Colonic mucosa (tissue), 4 donors: ENCODE measurements at regions of chr10 and their contacts with region 1.

Region 1: DNA sequence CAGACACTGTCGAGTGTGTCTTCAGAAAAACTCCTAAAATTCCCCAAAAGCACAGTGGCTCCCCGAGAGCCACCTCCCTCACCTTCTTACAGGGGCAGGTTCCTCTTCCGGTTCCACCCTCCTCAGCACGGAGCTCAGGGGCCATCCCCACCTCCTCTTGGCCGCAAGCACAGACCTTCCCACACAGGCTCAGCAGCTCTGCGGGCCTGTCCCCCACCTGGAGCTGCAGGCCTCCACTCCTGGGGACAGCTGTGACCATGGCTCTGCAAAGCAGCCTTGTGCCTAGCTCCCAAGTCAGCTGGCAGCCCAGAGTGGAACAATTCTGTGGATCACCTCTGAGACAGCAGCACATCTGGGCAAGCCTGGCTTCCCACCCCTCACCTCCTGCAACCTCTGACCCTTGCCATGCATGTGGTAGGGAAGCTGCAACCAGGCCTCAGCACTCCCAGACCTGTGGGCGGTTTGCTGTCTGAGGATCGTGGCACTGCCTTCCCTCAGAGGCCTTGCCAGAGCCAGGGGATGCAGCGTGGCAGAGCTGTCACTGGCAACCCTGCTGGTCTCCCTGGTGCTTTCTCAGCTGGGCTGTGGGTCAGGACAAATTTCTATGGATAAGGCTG is 79.7 kb downstream of the ALOX5 start:
- DNase-seq: no peak
- H3K4me3 ChIP-seq: no peak overlapping the region
- H3K27ac ChIP-seq: no peak overlapping the region
- H3K4me1 ChIP-seq: no peaks in the 10 kb centered on the region
- H3K27me3 ChIP-seq: no peaks in the 10 kb centered on the region
- CTCF ChIP-seq: no peak

Region 2: GRCh38 chr10:45249978-45250693 is 203.6 kb before region 1 on chr10:
- intact Hi-C with region 1: loop called (anchors 10 kb)
- DNase-seq: no peak
- H3K4me3 ChIP-seq: peak overlapping the region; percentile 7
- H3K27ac ChIP-seq: no peak overlapping the region
- H3K4me1 ChIP-seq: no peaks in the 10 kb centered on the region
- H3K27me3 ChIP-seq: no peaks in the 10 kb centered on the region
- CTCF ChIP-seq: peak; percentile 52